ENCODE measurements at regions of chr2 and their contacts with region 1.

Region 1: GRCh38 chr2:191369036-191369435 is 123.8 kb downstream of the MYO1B start:
- DNase-seq: no peak
- ATAC-seq: no peak

Region 2: DNA sequence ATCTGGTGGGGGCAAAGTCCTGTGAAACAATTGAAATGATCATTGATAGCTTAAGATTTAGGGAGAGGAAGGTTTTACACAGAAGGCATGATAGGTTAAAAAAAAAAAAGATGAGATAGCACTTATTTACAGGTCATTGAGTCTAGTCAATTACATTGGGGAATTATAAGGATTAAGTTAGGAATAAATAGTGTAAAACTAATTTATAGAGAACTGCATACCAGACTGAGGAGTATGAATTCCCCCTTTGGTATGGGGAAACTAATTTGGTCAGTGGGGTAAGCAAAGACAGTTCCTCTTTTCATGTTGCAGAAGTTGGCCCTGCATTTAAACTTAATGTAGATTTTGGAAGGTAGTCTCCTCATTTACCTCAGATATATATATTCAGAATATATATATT is 477.7 kb before region 1 on chr2:
- intact Hi-C with region 1: no loop called
- DNase-seq: no peak
- ATAC-seq: no peak

Region 3: GRCh38 chr2:191245046-191245868 is 123.8 kb before region 1 on chr2 and contains the start of gene MYO1B:
- intact Hi-C with region 1: loop called (anchors 10 kb)
- DNase-seq: peak; percentile 82
- ATAC-seq: peak; percentile 90
- total RNA-seq, gene MYO1B: 16.8 TPM

Region 4: GRCh38 chr2:191453761-191454160 is 84.7 kb after region 1 on chr2:
- intact Hi-C with region 1: no loop called
- DNase-seq: no peak
- ATAC-seq: no peak

Region 5: DNA sequence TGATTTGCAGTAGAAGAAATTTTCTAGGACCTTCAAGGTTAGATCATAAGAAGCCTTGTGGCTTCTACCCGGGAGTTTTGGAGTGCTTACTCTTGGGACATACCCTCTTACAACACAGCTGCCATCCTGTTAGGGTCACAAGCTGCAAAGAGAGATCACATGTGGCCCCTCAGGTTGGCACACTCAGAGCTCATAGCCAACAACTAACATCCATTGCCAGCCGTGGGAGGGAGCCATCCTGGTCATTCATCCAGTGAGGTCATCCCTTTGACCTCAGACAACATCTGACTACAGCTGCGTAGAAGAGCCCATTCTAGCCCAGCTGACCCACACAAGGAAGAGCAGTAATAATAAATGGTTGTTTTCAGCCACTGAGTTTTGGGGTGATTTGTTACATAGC is 232.0 kb after region 1 on chr2:
- intact Hi-C with region 1: no loop called
- DNase-seq: no peak
- ATAC-seq: no peak